Ovary (tissue), 10 donors: ENCODE measurements at regions of chr14 and their contacts with region 1.

Region 1: GRCh38 chr14:52434955-52435354 is 117.3 kb downstream of the TXNDC16 start:
- DNase-seq: no peak
- H3K4me3 ChIP-seq: no peak overlapping the region
- H3K27ac ChIP-seq: no peak overlapping the region
- H3K4me1 ChIP-seq: no peaks in the 10 kb centered on the region
- H3K27me3 ChIP-seq: no peaks in the 10 kb centered on the region
- CTCF ChIP-seq: no peak
- EP300 ChIP-seq: no peak
- POLR2A ChIP-seq: no peak

Region 2: DNA sequence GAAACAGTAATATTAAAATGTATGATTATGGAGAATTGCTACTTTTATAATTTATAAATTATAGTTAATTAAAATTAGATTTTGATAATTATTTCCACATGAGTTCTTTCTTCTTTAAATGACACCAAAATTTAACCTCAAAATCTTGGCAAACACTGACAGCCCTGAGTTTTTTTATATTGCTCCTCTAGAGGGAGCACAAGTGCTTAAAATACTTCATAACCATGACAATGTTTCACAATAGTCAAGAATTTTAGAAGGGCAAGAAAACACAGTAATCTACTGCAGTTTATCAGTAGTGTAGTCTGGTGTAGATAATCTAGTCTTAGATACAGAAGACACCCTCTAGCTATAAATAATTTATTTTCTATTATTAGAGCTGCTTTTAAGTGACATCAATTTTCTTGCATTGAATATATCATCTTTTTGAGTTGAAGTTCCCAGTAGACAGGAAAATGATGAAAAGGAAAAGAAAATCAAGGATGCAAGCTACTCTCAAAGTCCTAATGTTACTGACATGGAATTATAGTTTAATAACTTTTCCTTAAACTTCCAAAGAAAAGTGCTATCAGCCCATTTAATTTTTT is 135.2 kb before region 1 on chr14:
- intact Hi-C with region 1: no loop called
- DNase-seq: no peak
- H3K4me3 ChIP-seq: no peak overlapping the region
- H3K27ac ChIP-seq: no peak overlapping the region
- H3K4me1 ChIP-seq: no peaks in the 10 kb centered on the region
- H3K27me3 ChIP-seq: no peaks in the 10 kb centered on the region
- CTCF ChIP-seq: peak in 2 of 3 donors; percentile 46 to 57
- EP300 ChIP-seq: no peak
- POLR2A ChIP-seq: no peak

Region 3: DNA sequence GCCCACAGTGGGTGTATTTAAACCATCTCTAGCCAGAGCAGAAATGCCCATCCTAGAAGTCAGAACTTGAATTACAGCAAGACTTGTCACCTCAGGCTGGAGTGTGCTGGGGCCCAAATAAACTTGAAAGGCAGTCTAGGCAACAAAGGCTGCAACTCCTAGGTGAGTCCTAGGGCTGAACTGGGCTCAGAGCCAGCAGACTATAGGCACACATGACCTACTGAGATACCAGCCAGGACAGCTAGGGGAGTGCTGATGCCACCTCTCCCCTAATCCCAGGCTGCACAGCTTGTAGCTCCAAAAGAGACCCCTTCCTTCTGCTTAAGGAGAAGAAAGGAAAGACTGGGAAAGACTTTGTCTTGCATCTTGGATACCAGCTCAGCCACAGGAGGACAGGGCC is 11.4 kb after region 1 on chr14:
- intact Hi-C with region 1: loop called in 1 of 4 experiments (anchors 1 kb)
- DNase-seq: no peak
- H3K4me3 ChIP-seq: no peak overlapping the region
- H3K27ac ChIP-seq: no peak overlapping the region
- H3K4me1 ChIP-seq: no peaks in the 10 kb centered on the region
- H3K27me3 ChIP-seq: no peaks in the 10 kb centered on the region
- CTCF ChIP-seq: no peak
- EP300 ChIP-seq: no peak
- POLR2A ChIP-seq: no peak

Region 4: DNA sequence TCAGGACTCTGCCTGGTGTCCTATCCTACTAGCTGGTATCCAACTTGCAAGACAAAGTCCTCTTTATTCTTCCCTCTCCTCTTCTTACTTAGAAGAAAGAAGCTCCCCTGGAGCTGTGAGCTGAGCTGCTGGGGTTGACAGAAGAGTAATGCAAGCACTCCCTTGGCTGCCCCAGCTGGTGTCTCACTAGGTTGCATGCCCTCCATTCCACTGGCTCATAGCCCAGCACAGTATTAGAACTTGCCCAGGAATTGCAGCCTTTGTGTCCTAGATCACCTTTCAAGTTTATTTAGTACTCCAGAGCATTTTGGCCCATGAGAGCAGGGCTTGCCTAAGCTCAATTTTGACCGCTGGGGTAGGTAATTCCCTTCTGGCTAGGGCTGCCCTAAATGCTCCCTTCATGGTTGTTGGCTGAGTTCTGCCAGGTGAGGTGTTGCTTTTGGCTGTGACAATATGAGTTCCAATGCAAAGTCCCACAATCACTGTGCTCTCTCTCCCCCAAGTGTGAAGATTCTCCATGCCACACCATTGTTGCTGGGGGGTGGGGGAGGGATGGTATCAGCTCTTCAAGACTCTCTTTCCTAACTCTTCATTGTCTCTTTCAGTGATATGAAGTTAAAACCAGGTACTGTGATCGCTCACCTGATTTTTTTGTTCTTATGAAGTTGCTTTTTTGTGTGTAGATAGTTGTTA is 1035.5 kb after region 1 on chr14:
- intact Hi-C with region 1: no loop called
- DNase-seq: no peak
- H3K4me3 ChIP-seq: no peak overlapping the region
- H3K27ac ChIP-seq: no peak overlapping the region
- H3K4me1 ChIP-seq: no peaks in the 10 kb centered on the region
- H3K27me3 ChIP-seq: no peaks in the 10 kb centered on the region
- CTCF ChIP-seq: no peak
- EP300 ChIP-seq: no peak
- POLR2A ChIP-seq: no peak